Activated CD4-positive, alpha-beta memory T cell treated with anti-CD3 and anti-CD28 coated beads for 36 hours (primary cell): ENCODE measurements at regions of chr7 and their contacts with region 1.

Region 1: DNA sequence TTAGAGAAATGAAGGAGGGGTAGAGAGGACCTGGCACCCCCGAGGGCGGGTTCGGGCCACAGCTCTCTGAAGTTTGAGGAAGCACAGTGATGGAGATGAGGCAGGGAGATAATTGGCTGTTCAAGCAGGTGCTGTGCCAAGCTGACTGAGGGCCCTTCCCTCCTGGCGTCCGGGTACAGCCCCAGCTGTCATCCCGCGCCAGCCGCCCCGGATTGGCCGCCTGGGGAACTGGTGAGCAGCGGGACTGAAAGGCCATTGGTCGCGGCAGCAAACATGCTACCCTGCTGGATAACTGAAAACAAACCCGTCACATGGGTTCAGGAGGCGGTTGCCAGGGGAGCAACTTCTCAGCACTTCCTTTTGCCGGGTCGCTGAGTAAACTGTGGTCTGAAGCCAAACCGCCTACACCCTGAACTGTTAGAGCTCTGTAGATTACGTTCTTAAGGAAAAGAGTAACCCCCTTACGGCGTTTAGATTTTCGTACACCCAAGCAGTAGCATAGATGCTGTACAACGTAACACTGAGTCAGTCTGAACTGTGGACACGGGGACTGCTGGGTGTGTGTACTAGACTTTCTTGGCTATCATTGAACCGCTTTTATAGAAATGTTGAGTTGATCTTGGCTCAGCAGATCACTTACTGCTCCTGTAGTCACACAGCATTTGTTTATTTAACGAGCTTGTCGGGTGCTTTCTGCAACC is 1.3 kb downstream of the INSIG1 start:
- DNase-seq: peak; percentile 98
- H3K4me3 Mint-ChIP-seq: peak overlapping the region; percentile 93
- H3K27ac Mint-ChIP-seq: peak overlapping the region; percentile 96
- H3K4me1 Mint-ChIP-seq: peaks cover 38% of the 10 kb centered on the region
- H3K27me3 Mint-ChIP-seq: no peaks in the 10 kb centered on the region

Region 2: GRCh38 chr7:155011081-155011480 is 287.9 kb before region 1 on chr7:
- CTCF ChIA-PET with region 1: no interaction called
- POLR2A ChIA-PET with region 1: no interaction called
- intact Hi-C with region 1: no loop called
- DNase-seq: no peak
- H3K4me3 Mint-ChIP-seq: no peak overlapping the region
- H3K27ac Mint-ChIP-seq: no peak overlapping the region
- H3K4me1 Mint-ChIP-seq: no peaks in the 10 kb centered on the region
- H3K27me3 Mint-ChIP-seq: no peaks in the 10 kb centered on the region

Region 3: DNA sequence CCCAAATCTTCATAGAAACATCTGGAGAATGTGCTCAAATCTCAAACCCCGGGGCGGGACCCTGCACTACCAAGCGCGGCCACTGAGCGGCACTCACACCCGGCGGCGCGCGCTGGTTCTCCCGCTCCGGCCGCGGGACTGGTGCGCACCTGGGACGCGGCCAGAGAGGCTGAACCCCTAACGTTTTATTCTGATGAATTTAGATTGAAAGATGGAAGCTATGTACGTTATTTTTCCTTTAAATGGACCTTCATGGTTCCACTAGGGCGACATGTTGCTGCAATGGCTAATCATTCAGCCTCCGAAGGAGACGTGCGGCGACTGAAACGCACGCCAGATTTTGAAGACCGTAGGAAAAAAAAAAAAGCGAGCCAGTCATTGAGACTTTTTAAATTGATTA is 108.3 kb before region 1 on chr7:
- CTCF ChIA-PET with region 1: interaction called, 12 read pairs
- POLR2A ChIA-PET with region 1: interaction called, 4 read pairs
- intact Hi-C with region 1: loop called (anchors 1 kb)
- DNase-seq: peak; percentile 76
- H3K4me3 Mint-ChIP-seq: no peak overlapping the region
- H3K27ac Mint-ChIP-seq: no peak overlapping the region
- H3K4me1 Mint-ChIP-seq: peaks cover 28% of the 10 kb centered on the region
- H3K27me3 Mint-ChIP-seq: peaks cover 4% of the 10 kb centered on the region

Region 4: DNA sequence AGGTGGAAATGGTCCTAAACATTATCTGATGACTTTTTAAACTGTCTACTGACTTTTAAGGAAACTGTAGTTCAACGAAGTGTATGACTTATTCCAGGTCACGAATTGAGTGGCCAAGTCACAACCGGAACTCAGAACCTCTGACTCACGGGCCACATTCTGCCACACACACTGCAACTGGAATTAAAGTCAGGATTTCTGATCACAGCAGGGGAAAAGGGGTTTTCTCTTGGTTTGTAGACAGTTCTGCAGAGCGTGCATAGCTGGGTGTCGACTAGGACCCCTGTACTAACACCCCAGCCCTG is 21.3 kb before region 1 on chr7:
- CTCF ChIA-PET with region 1: interaction called, 3 read pairs
- POLR2A ChIA-PET with region 1: interaction called, 7 read pairs
- intact Hi-C with region 1: loop called (anchors 1 kb)
- DNase-seq: peak; percentile 76
- H3K4me3 Mint-ChIP-seq: no peak overlapping the region
- H3K27ac Mint-ChIP-seq: no peak overlapping the region
- H3K4me1 Mint-ChIP-seq: peaks cover 28% of the 10 kb centered on the region
- H3K27me3 Mint-ChIP-seq: peaks cover 32% of the 10 kb centered on the region

Region 5: GRCh38 chr7:155322530-155322929 is 23.5 kb after region 1 on chr7:
- CTCF ChIA-PET with region 1: no interaction called
- POLR2A ChIA-PET with region 1: no interaction called
- intact Hi-C with region 1: no loop called
- DNase-seq: no peak
- H3K4me3 Mint-ChIP-seq: no peak overlapping the region
- H3K27ac Mint-ChIP-seq: no peak overlapping the region
- H3K4me1 Mint-ChIP-seq: no peaks in the 10 kb centered on the region
- H3K27me3 Mint-ChIP-seq: no peaks in the 10 kb centered on the region

Region 6: GRCh38 chr7:155338632-155339320 is 39.8 kb after region 1 on chr7:
- CTCF ChIA-PET with region 1: interaction called, 3 read pairs
- POLR2A ChIA-PET with region 1: interaction called, 10 read pairs
- intact Hi-C with region 1: loop called (anchors 2 kb)
- DNase-seq: peak; percentile 29
- H3K4me3 Mint-ChIP-seq: no peak overlapping the region
- H3K27ac Mint-ChIP-seq: no peak overlapping the region
- H3K4me1 Mint-ChIP-seq: peaks cover 6% of the 10 kb centered on the region
- H3K27me3 Mint-ChIP-seq: peaks cover 18% of the 10 kb centered on the region

Region 7: GRCh38 chr7:155644178-155644970 is 345.4 kb after region 1 on chr7 and contains the start of gene RBM33:
- CTCF ChIA-PET with region 1: no interaction called
- POLR2A ChIA-PET with region 1: interaction called, 3 read pairs
- intact Hi-C with region 1: loop called (anchors 2 kb)
- DNase-seq: peak; percentile 87
- H3K4me3 Mint-ChIP-seq: peak within 1 kb of the TSS; percentile 89
- H3K27ac Mint-ChIP-seq: peak within 1 kb of the TSS; percentile 94
- H3K4me1 Mint-ChIP-seq: peaks cover 40% of the 10 kb centered on the region
- H3K27me3 Mint-ChIP-seq: no peaks in the 10 kb centered on the region
- total RNA-seq, gene RBM33: 57.7 to 65.3 TPM